WTC11 (cell line): ENCODE measurements at regions of chr10 and their contacts with region 1.

Region 1: GRCh38 chr10:123043409-123043925 is 34.7 kb downstream of the ACADSB start:
- DNase-seq: peak; percentile 70
- ATAC-seq: peak; percentile 96
- H3K4me3 Mint-ChIP-seq: no peak overlapping the region
- H3K27ac Mint-ChIP-seq: no peak overlapping the region
- H3K4me1 Mint-ChIP-seq: peaks cover 10% of the 10 kb centered on the region
- H3K27me3 Mint-ChIP-seq: no peaks in the 10 kb centered on the region
- CTCF ChIP-seq: peak; percentile 64

Region 2: GRCh38 chr10:123021517-123021916 is 21.9 kb before region 1 on chr10:
- CTCF ChIA-PET with region 1: interaction called, 23 read pairs
- POLR2A ChIA-PET with region 1: no interaction called
- DNase-seq: no peak
- ATAC-seq: no peak
- H3K4me3 Mint-ChIP-seq: no peak overlapping the region; the same call in 1 of the 2 replicates
- H3K27ac Mint-ChIP-seq: no peak overlapping the region
- H3K4me1 Mint-ChIP-seq: peaks cover 65% of the 10 kb centered on the region
- H3K27me3 Mint-ChIP-seq: peaks cover 68% of the 10 kb centered on the region
- CTCF ChIP-seq: no peak

Region 3: GRCh38 chr10:123132576-123133477 is 89.4 kb after region 1 on chr10:
- CTCF ChIA-PET with region 1: interaction called, 22 read pairs
- POLR2A ChIA-PET with region 1: no interaction called
- DNase-seq: peak; percentile 96
- ATAC-seq: peak; percentile 54
- H3K4me3 Mint-ChIP-seq: peak overlapping the region; percentile 75
- H3K27ac Mint-ChIP-seq: no peak overlapping the region
- H3K4me1 Mint-ChIP-seq: peaks cover 24% of the 10 kb centered on the region
- H3K27me3 Mint-ChIP-seq: peaks cover 95% of the 10 kb centered on the region
- CTCF ChIP-seq: peak; percentile 90

Region 4: DNA sequence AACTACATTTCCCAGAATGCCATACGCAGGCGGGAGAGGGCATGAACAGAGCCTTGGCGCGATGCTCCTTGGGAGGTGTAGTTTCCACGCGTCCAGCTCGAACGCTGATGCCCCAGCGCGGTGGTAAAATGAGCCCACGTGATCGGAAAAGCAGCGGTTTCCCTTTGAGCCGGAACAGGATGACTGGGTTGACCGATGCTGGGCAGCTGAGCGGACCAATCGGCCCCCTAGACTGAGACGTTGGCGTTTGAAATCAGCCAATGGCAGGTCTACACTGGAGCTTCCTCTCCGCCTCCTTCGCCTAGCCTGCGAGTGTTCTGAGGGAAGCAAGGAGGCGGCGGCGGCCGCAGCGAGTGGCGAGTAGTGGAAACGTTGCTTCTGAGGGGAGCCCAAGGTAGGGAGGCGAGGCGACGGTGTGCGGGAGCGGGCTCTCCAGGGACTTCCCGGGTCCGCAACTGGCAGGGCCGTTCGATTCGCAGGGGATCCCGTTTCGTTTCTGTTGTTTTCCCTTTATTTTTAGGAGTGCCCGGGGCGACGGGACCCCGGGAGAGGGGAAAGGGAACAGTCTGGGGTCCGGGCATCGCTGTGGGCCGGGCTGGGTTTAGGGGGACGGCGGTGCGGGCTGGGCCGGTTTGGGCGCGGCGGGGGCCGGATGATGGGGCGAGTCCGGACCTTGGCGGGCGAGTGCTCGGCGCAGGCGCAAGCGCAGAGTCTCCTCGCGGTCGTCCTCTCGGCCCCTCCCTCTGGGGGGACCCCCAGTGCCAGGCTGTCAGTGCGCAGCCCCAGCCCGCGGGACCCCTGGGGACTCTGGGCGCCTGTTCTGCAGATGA is 110.8 kb after region 1 on chr10 and contains the start of gene BUB3:
- CTCF ChIA-PET with region 1: interaction called, 43 read pairs
- POLR2A ChIA-PET with region 1: no interaction called
- DNase-seq: peak; percentile 97
- ATAC-seq: peak; percentile 88
- H3K4me3 Mint-ChIP-seq: peak within 1 kb of the TSS; percentile 99
- H3K27ac Mint-ChIP-seq: peak within 1 kb of the TSS; percentile 99
- H3K4me1 Mint-ChIP-seq: peaks cover 75% of the 10 kb centered on the region
- H3K27me3 Mint-ChIP-seq: peaks cover 31% of the 10 kb centered on the region
- CTCF ChIP-seq: no peak
- total RNA-seq, gene BUB3: 180 to 192 TPM (median 186 TPM) in 3 replicates

Region 5: GRCh38 chr10:123380497-123381085 is 337.1 kb after region 1 on chr10:
- CTCF ChIA-PET with region 1: interaction called, 22 read pairs
- POLR2A ChIA-PET with region 1: no interaction called
- DNase-seq: no peak
- ATAC-seq: no peak
- H3K4me3 Mint-ChIP-seq: no peak overlapping the region
- H3K27ac Mint-ChIP-seq: no peak overlapping the region
- H3K4me1 Mint-ChIP-seq: peaks cover 17% of the 10 kb centered on the region
- H3K27me3 Mint-ChIP-seq: no peaks in the 10 kb centered on the region
- CTCF ChIP-seq: no peak